ENCODE measurements at regions of chr14 and their contacts with region 1.

Region 1: GRCh38 chr14:62126879-62127478 is 364.8 kb downstream of the SNAPC1 start:
- DNase-seq: peak; percentile 75
- H3K4me3 ChIP-seq: no peak overlapping the region
- H3K27ac ChIP-seq: no peak overlapping the region
- H3K4me1 ChIP-seq: no peaks in the 10 kb centered on the region
- H3K27me3 ChIP-seq: peaks cover 42 to 66% of the 10 kb centered on the region in 2 experiments
- CTCF ChIP-seq: peak; percentile 44 to 63
- POLR2A ChIP-seq: no peak

Region 2: DNA sequence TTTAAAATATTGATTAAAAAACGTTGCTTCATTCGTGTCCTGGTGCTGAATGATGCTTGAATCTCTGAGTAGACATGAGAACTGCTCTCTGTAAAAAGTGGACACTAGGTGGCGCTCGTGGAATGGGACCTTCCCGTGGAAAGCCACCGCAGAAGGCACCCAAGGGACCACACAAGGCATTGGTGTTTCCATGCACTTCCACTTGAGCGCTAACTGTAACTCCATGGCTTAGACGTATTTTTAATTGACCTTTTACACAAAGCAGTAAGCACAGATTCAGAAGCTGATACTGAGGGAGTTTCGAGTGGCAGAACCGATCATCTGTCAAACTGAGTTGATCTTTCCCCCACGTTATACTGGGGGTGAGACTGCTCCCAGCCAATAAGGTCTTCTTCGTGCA is 670.3 kb before region 1 on chr14:
- CTCF ChIA-PET with region 1: interaction called, 40 read pairs
- POLR2A ChIA-PET with region 1: no interaction called
- dilution Hi-C with region 1: no loop called
- intact Hi-C with region 1: loop called (anchors 1 kb)
- DNase-seq: peak; percentile 72
- H3K4me3 ChIP-seq: no peak overlapping the region
- H3K27ac ChIP-seq: no peak overlapping the region
- H3K4me1 ChIP-seq: peaks cover 22% of the 10 kb centered on the region
- H3K27me3 ChIP-seq: no peaks in the 10 kb centered on the region
- CTCF ChIP-seq: peak; percentile 75 to 79
- POLR2A ChIP-seq: no peak

Region 3: GRCh38 chr14:61837336-61838229 is 289.4 kb before region 1 on chr14:
- CTCF ChIA-PET with region 1: interaction called, 20 read pairs
- POLR2A ChIA-PET with region 1: no interaction called
- dilution Hi-C with region 1: no loop called
- intact Hi-C with region 1: no loop called
- DNase-seq: peak; percentile 84
- H3K4me3 ChIP-seq: no peak overlapping the region
- H3K27ac ChIP-seq: peak overlapping the region; percentile 72
- H3K4me1 ChIP-seq: peaks cover 34% of the 10 kb centered on the region
- H3K27me3 ChIP-seq: no peaks in the 10 kb centered on the region
- CTCF ChIP-seq: peak; percentile 85
- POLR2A ChIP-seq: no peak

Region 4: DNA sequence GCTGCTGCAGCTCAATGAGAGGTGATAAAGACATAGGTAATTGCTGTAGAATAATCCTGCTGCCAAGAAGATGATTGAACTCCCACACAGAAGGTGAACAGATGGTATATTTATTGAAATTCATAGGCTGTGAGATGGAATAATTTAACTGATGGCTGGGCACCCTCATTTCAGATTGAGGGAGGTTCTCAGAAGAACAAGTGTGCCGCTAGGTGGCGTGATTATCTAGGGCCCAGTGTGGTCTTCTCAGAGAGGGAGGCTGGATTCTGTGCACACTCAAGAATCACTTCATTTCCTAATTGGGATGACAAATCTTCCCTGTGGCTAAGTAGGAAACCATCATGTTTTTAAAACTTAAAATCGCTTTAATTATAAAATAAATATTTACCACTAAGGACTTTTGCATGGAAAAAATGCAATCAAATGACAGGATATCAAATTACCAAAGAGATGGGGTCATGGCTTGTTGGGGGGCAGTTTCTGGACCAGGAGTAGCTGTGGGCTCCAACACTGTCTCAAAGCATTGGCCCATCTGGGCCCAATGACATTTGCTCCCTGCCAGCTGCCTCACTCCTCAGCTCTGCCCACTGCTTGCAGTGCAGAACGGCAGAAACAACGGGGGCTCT is 232.4 kb before region 1 on chr14:
- CTCF ChIA-PET with region 1: interaction called, 77 read pairs
- POLR2A ChIA-PET with region 1: no interaction called
- dilution Hi-C with region 1: no loop called
- intact Hi-C with region 1: loop called (anchors 1 kb)
- DNase-seq: peak; percentile 51
- H3K4me3 ChIP-seq: no peak overlapping the region
- H3K27ac ChIP-seq: no peak overlapping the region
- H3K4me1 ChIP-seq: no peaks in the 10 kb centered on the region
- H3K27me3 ChIP-seq: peaks cover 2 to 18% of the 10 kb centered on the region in 2 experiments
- CTCF ChIP-seq: peak; percentile 70 to 74
- POLR2A ChIP-seq: no peak

Region 5: DNA sequence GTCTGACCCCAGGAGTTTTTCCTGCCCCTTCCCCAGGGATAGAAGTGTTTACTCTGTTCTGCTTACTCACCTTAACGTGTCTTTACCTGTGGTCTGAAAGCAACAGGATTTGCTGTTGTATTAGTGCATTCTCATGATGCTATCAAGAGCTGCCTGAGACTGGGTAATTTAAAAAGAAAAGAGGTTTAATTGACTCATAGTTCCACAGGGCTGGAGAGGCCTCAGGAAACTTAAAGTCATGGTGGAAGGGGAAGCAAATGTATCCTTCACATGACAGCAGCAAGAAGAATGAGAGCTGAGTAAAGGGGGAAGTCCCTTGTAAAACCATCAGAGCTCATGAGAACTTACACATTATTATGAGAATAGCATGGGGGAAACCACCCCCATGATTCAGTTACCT is 124.3 kb before region 1 on chr14:
- CTCF ChIA-PET with region 1: no interaction called
- POLR2A ChIA-PET with region 1: no interaction called
- dilution Hi-C with region 1: no loop called
- intact Hi-C with region 1: no loop called
- DNase-seq: peak; percentile 6
- H3K4me3 ChIP-seq: no peak overlapping the region
- H3K27ac ChIP-seq: peak overlapping the region; percentile 82
- H3K4me1 ChIP-seq: peaks cover 11% of the 10 kb centered on the region
- H3K27me3 ChIP-seq: peaks cover 0 to 2% of the 10 kb centered on the region in 2 experiments
- CTCF ChIP-seq: no peak
- POLR2A ChIP-seq: no peak

Region 6: DNA sequence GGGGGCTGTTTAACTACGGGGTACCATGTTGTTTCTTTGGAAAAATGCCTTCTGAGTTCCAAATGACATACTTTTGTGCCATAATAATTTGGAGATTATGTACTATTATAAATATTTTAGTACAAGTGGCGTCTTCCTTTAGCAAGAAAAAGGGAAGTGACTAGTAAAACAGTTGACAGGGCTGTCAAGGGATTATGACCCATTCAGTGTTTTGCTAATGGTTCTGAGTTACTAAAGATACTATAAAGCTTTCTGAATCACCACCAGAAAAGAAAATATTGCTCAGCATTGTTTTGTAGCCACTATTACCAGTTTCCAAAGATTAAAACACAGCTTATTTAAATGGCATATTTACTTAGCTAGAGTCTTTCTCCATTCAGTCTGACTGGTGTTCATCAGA is 29.9 kb before region 1 on chr14:
- CTCF ChIA-PET with region 1: interaction called, 14 read pairs
- POLR2A ChIA-PET with region 1: no interaction called
- dilution Hi-C with region 1: no loop called
- intact Hi-C with region 1: no loop called
- DNase-seq: peak; percentile 51
- H3K4me3 ChIP-seq: no peak overlapping the region
- H3K27ac ChIP-seq: peak overlapping the region; percentile 28
- H3K4me1 ChIP-seq: peaks cover 10% of the 10 kb centered on the region
- H3K27me3 ChIP-seq: peaks cover 0 to 5% of the 10 kb centered on the region in 2 experiments
- CTCF ChIP-seq: no peak
- POLR2A ChIP-seq: no peak

Measured in endothelial cell of umbilical vein (primary cell).